Breast epithelium (tissue), 4 donors: ENCODE measurements at regions of chr21 and their contacts with region 1.

Region 1: GRCh38 chr21:24131056-24131455 is 1476.2 kb downstream of the MRPL39 start:
- DNase-seq: no peak
- H3K4me3 ChIP-seq: no peak overlapping the region
- H3K27ac ChIP-seq: no peak overlapping the region
- H3K4me1 ChIP-seq: no peaks in the 10 kb centered on the region
- H3K27me3 ChIP-seq: no peaks in the 10 kb centered on the region
- CTCF ChIP-seq: no peak
- POLR2A ChIP-seq: no peak

Region 2: DNA sequence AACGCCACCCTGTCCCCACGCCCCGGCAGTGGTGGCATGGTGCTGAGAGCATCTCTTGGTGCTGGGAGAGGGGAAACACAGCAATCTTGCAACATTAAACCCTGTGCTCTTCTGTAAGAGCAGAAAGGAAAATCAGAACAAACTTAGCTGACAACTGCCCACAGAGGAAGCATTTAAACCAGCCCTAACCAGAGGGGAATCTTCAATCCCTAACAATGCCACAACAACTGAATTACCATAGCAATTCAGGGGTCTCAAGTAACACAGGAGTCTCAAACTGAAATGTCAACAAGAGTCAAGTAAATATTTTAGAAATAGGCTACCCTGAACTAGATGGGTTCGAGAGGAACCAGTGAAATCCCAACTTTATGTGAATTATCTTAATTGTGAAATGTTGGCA is 1149.2 kb before region 1 on chr21:
- intact Hi-C with region 1: loop called (anchors 10 kb)
- DNase-seq: no peak
- H3K4me3 ChIP-seq: no peak overlapping the region
- H3K27ac ChIP-seq: no peak overlapping the region
- H3K4me1 ChIP-seq: no peaks in the 10 kb centered on the region
- H3K27me3 ChIP-seq: no peaks in the 10 kb centered on the region
- CTCF ChIP-seq: no peak
- POLR2A ChIP-seq: no peak